Transverse colon (tissue), 4 donors: ENCODE measurements at regions of chr21 and their contacts with region 1.

Region 1: DNA sequence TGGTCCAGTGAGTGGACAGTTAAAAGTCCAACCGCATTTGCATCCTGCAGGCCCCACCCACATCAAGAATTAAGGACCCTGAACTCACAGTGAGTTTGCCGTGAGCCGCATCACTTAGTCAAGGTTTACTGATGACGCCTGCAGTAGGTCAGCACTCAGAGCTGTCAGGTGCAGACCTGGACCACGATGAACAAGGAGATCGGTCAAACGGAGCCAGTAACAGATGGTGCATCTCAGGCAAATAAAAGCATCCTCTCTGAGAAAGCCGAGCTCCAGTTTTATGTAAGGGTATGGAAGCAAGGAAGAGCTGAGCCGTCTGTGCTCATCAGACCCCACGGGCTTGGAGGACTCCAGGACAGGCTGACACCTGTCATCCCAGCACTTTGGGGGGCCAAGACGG is 4.5 kb downstream of the PRDM15 start:
- DNase-seq: no peak
- H3K4me3 ChIP-seq: no peak overlapping the region
- H3K27ac ChIP-seq: no peak overlapping the region
- H3K4me1 ChIP-seq: peaks cover 0 to 13% (median 6%) of the 10 kb centered on the region in 4 donors
- H3K27me3 ChIP-seq: no peaks in the 10 kb centered on the region
- CTCF ChIP-seq: no peak
- EP300 ChIP-seq: no peak
- POLR2A ChIP-seq: no peak

Region 2: DNA sequence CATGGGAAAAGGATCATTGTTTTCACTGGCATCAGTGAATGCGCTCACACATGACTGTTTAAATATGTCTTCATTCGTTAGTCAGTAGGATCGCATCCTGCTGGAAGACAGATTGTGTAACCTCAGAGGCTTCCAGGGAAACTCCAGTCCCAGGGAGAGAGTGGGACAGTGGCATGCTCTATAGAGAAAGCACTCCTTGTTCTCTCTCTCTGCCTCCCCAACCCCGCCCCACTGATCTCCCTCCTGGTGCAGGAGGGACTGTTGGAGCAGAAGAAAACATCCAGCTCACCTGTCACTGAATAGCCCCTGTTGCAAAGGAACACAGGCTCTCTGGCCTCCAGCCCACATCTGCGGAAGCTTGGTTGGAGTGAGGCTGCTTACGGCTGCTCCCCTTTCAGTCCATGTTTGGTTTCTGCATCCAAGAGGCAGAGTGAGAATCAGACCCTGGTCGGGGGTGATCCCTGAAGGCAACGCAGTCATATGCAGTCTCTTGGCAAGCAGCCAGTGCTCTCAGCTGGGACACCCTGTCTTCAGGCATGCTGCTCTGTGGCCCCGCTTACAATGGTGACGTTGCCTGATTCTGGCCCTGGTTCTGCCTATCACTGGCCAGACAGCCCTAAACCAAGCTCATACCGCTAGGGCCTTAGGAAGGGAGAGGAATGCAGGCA is 667.1 kb before region 1 on chr21:
- in situ Hi-C with region 1: no loop called
- intact Hi-C with region 1: no loop called
- DNase-seq: peak; percentile 46
- H3K4me3 ChIP-seq: no peak overlapping the region
- H3K27ac ChIP-seq: peak overlapping the region; percentile 1 to 60 (median 32)
- H3K4me1 ChIP-seq: peaks cover 0 to 12% (median 8%) of the 10 kb centered on the region in 4 donors
- H3K27me3 ChIP-seq: no peaks in the 10 kb centered on the region
- CTCF ChIP-seq: no peak
- EP300 ChIP-seq: no peak
- POLR2A ChIP-seq: no peak

Region 3: GRCh38 chr21:41848533-41848932 is 26.1 kb before region 1 on chr21:
- in situ Hi-C with region 1: no loop called
- intact Hi-C with region 1: no loop called
- DNase-seq: no peak
- H3K4me3 ChIP-seq: no peak overlapping the region
- H3K27ac ChIP-seq: no peak overlapping the region
- H3K4me1 ChIP-seq: no peaks in the 10 kb centered on the region
- H3K27me3 ChIP-seq: no peaks in the 10 kb centered on the region
- CTCF ChIP-seq: no peak
- EP300 ChIP-seq: no peak
- POLR2A ChIP-seq: no peak

Region 4: GRCh38 chr21:41858466-41859296 is 15.9 kb before region 1 on chr21:
- in situ Hi-C with region 1: no loop called
- intact Hi-C with region 1: loop called (anchors 1 kb)
- DNase-seq: no peak
- H3K4me3 ChIP-seq: no peak overlapping the region
- H3K27ac ChIP-seq: no peak overlapping the region
- H3K4me1 ChIP-seq: peaks cover 0 to 6% (median 0%) of the 10 kb centered on the region in 4 donors
- H3K27me3 ChIP-seq: no peaks in the 10 kb centered on the region
- CTCF ChIP-seq: no peak
- EP300 ChIP-seq: no peak
- POLR2A ChIP-seq: no peak

Region 5: DNA sequence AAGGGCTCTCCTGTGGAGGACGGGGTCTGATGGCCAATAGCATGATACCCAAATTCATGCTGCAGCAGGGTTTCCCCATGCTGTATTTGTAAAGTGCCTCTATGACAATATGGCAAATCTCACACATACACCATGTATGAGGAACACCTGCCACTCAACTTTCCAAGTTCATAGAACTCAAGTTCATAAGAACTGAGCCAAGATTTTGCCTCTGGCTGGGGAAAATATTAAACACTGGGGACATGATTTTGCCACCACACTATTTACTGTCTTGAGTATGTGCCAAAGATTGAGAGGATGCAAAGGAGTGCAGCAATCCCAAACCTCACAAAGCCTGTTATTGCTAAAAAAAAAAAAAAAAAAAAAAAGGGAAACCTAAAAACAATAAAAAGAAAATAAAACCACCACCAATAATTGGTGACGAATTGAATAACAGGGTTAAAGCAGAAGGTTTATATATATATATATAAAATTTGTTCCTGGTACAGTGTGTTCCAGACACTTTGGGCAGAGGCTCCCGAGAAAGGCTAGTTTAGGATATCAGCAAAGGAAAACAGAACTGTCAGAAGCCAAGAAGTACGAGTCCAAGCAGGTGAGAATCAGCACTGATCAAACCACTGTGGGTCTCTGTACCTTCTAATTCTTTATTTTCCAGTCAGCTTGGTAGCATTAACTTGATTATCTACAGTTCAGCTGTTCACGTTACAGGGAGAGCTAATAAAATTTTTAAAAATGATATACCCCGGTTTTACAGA is 111.2 kb after region 1 on chr21:
- in situ Hi-C with region 1: no loop called
- intact Hi-C with region 1: no loop called
- DNase-seq: no peak
- H3K4me3 ChIP-seq: no peak overlapping the region
- H3K27ac ChIP-seq: no peak overlapping the region
- H3K4me1 ChIP-seq: no peaks in the 10 kb centered on the region
- H3K27me3 ChIP-seq: no peaks in the 10 kb centered on the region
- CTCF ChIP-seq: no peak
- EP300 ChIP-seq: no peak
- POLR2A ChIP-seq: no peak